ENCODE measurements at regions of chr13 and their contacts with region 1.

Region 1: GRCh38 chr13:73138643-73139491 is 80.1 kb downstream of the KLF5 start:
- DNase-seq: peak; percentile 81 to 89
- H3K4me3 ChIP-seq: no peak overlapping the region
- H3K4me3 Mint-ChIP-seq: peak overlapping the region; percentile 61
- H3K27ac Mint-ChIP-seq: peak overlapping the region; percentile 89
- H3K4me1 ChIP-seq: peaks cover 44% of the 10 kb centered on the region
- H3K4me1 Mint-ChIP-seq: peaks cover 51% of the 10 kb centered on the region
- H3K27me3 ChIP-seq: no peaks in the 10 kb centered on the region
- H3K27me3 Mint-ChIP-seq: no peaks in the 10 kb centered on the region
- CTCF ChIP-seq: no peak

Region 2: DNA sequence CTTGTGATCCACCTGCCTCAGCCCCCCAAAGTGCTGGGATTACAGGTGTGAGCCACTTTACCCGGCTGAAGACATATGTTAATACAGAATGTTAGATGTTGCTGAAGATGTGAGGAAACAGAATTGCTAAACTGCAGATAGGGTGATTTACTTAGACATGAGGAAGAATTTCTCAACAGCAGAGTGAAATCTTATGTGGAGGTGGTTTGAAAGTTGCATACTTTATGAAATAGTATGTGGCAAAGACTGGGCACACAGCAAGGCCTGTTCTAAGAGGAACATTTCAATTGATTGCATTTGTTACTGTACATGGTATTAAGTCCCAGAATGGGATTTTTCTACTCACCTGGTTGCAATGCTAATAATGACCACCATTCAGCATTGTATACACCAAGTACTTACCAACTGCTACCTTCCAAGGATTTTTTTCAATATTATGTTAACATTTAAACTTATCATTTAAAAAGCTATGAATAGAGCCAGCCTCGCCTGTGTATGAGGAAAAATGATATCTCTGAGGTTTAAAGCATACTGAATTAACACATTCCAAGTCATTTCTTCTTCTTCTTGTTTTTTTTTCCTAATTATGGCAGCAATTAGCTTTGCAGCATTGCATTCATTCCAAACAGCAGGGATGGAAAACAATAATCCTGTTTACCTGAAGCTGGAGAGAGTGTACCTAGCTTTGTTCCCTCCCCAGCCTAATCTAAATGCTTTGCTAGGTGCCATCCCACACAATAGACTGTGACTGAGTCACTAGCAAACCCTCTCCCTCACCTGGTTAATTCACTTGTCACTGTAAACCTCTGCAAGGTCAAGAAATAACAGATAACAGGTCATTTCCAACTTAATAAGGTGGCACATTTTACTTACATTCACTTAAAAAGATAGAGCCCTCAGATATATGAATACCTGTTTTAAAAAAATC is 99.4 kb before region 1 on chr13:
- CTCF ChIA-PET with region 1: no interaction called
- POLR2A ChIA-PET with region 1: interaction called, 4 read pairs
- intact Hi-C with region 1: loop called (anchors 1 kb)
- DNase-seq: no peak
- H3K4me3 ChIP-seq: no peak overlapping the region
- H3K4me3 Mint-ChIP-seq: peak overlapping the region; percentile 38
- H3K27ac Mint-ChIP-seq: peak overlapping the region; percentile 45
- H3K4me1 ChIP-seq: peaks cover 57% of the 10 kb centered on the region
- H3K4me1 Mint-ChIP-seq: peaks cover 36% of the 10 kb centered on the region
- H3K27me3 ChIP-seq: no peaks in the 10 kb centered on the region
- H3K27me3 Mint-ChIP-seq: no peaks in the 10 kb centered on the region
- CTCF ChIP-seq: peak; percentile 4 to 18

Region 3: DNA sequence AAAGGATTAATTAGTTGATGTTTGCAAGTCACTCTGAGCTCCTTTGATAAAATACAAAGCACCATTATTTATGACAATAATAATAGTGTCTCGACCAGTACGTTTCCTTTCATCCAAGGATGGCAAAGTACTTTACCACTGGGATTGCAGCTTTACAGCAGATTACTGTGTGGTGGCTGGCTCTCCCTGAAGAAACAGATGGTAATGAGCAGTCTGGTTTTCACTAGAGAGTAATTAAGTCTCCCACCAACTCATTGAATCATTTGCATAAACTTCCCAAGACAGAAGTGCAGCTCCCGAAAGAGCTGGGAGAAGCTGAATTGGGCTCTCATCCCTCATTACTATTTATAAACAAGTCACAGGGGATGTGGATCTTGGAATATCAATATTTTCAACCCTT is 31.4 kb before region 1 on chr13:
- CTCF ChIA-PET with region 1: no interaction called
- POLR2A ChIA-PET with region 1: no interaction called
- intact Hi-C with region 1: loop called (anchors 1 kb)
- DNase-seq: no peak
- H3K4me3 ChIP-seq: no peak overlapping the region
- H3K4me3 Mint-ChIP-seq: no peak overlapping the region
- H3K27ac Mint-ChIP-seq: no peak overlapping the region
- H3K4me1 ChIP-seq: peaks cover 38% of the 10 kb centered on the region
- H3K4me1 Mint-ChIP-seq: peaks cover 40% of the 10 kb centered on the region
- H3K27me3 ChIP-seq: no peaks in the 10 kb centered on the region
- H3K27me3 Mint-ChIP-seq: no peaks in the 10 kb centered on the region
- CTCF ChIP-seq: no peak

Region 4: DNA sequence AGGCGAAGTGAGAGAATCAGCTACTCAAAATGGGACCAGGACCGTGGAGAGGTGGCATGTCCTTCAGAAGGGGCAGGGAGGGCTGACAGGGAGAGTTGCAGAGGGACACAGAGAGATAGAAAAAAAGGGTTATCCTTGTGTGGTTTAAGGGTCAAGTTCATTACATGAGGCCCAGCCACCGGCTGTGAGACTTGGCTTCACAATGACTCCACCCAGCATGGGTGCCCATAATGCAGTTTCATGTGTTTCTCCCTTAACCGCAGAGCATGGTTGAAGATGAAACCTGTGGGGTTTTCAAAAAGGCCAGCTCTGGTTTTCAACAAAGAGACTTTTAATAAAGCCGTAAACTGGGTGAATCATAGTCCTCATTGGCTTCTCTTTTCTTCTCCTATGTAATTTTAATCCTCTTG is 84.5 kb after region 1 on chr13:
- CTCF ChIA-PET with region 1: no interaction called
- POLR2A ChIA-PET with region 1: no interaction called
- intact Hi-C with region 1: loop called (anchors 1 kb)
- DNase-seq: peak in 1 of 2 experiments; percentile 12
- H3K4me3 ChIP-seq: no peak overlapping the region
- H3K4me3 Mint-ChIP-seq: no peak overlapping the region
- H3K27ac Mint-ChIP-seq: peak overlapping the region; percentile 62
- H3K4me1 ChIP-seq: peaks cover 34% of the 10 kb centered on the region
- H3K4me1 Mint-ChIP-seq: peaks cover 44% of the 10 kb centered on the region
- H3K27me3 ChIP-seq: no peaks in the 10 kb centered on the region
- H3K27me3 Mint-ChIP-seq: no peaks in the 10 kb centered on the region
- CTCF ChIP-seq: no peak

Region 5: DNA sequence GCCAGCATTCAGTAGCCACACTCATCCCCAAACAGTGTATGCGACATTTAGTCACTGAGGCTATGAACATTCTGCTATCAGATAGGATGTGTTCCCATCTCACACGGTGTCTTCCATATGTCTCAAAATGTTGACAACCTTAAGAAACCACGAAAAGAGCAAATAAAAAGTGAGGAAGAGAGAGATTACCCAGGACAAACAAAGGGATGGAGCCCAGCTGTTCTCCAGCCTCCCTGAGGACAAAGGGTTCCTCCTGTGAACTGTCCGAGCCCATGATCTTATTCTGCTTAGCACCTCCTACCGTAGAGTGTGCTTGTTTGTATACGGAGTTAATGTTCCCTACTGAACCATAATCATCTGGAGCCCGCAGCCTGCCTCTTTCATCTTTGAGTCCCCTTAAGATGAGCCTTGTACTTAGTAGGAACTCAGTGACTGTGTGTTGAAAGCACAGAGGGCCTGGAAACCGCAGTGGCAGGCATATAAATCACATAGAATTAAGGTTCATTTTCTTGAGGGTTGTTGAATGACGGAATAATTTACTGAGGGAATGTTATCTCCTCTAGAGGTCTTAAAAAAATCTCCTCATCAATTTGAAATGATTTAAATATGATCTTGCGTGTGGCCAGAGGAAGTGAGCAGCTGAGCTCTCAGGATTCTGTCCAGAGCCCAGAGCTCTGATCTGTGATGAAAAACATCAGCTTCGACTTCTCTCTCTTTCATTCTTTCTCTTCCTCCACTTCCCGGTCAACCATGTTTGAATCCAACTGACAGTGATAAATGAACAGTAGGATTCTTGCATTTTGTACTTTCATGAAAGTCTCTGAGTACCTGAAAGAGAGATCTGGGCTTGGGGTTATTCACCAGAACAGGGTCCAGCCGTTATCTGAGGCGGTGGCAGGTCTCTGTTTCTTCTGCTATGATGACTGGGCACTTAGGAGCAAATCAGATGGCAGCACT is 120.5 kb after region 1 on chr13:
- CTCF ChIA-PET with region 1: no interaction called
- POLR2A ChIA-PET with region 1: no interaction called
- intact Hi-C with region 1: no loop called
- DNase-seq: no peak
- H3K4me3 ChIP-seq: no peak overlapping the region
- H3K4me3 Mint-ChIP-seq: no peak overlapping the region
- H3K27ac Mint-ChIP-seq: peak overlapping the region; percentile 60
- H3K4me1 ChIP-seq: peaks cover 26% of the 10 kb centered on the region
- H3K4me1 Mint-ChIP-seq: peaks cover 40% of the 10 kb centered on the region
- H3K27me3 ChIP-seq: no peaks in the 10 kb centered on the region
- H3K27me3 Mint-ChIP-seq: no peaks in the 10 kb centered on the region
- CTCF ChIP-seq: no peak

Region 6: DNA sequence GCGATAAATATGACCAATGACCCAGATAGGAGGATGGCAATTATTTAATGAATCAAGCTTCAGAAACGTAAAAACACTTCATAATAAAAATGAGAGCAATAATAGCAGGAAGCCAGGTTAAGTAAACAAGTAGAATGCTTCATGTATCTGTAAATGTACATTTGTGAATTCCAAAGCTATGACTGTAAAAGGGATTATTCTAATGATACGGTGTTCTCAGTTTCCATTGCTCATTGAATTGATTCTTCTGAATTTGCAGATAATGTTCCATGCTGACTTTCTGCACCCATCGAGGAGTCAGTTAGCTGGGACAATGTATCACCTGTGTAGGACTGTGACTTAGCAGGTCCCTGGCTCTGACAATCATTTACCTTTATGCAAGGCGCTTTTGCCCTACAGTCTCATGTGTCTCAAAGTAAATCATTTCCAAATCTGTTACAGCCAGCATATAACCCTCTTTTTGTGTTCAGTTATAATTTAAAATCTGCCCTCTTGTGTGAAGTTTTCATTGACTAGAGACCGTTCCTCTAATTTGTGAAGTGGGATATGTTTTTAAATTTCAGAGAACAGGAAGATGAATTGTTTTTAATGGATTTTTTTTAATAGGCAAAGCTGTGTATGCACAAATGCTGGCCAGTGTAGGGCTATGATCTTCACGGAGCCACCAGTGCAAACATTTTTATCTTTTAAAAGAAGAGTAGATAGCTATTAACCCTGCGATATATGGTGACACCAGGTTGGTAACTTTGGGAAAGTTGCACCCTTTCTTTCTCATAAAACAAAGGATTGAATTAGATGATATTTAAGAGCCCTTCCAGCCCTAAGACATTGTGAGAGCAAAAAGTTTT is 187.1 kb after region 1 on chr13:
- CTCF ChIA-PET with region 1: no interaction called
- POLR2A ChIA-PET with region 1: no interaction called
- intact Hi-C with region 1: loop called (anchors 2 kb)
- DNase-seq: peak; percentile 64 to 78
- H3K4me3 ChIP-seq: no peak overlapping the region
- H3K4me3 Mint-ChIP-seq: peak overlapping the region; percentile 65
- H3K27ac Mint-ChIP-seq: peak overlapping the region; percentile 75
- H3K4me1 ChIP-seq: peaks cover 42% of the 10 kb centered on the region
- H3K4me1 Mint-ChIP-seq: peaks cover 30% of the 10 kb centered on the region
- H3K27me3 ChIP-seq: no peaks in the 10 kb centered on the region
- H3K27me3 Mint-ChIP-seq: no peaks in the 10 kb centered on the region
- CTCF ChIP-seq: no peak